Mammary epithelial cell (primary cell): ENCODE measurements at regions of chr1 and their contacts with region 1.

Region 1: DNA sequence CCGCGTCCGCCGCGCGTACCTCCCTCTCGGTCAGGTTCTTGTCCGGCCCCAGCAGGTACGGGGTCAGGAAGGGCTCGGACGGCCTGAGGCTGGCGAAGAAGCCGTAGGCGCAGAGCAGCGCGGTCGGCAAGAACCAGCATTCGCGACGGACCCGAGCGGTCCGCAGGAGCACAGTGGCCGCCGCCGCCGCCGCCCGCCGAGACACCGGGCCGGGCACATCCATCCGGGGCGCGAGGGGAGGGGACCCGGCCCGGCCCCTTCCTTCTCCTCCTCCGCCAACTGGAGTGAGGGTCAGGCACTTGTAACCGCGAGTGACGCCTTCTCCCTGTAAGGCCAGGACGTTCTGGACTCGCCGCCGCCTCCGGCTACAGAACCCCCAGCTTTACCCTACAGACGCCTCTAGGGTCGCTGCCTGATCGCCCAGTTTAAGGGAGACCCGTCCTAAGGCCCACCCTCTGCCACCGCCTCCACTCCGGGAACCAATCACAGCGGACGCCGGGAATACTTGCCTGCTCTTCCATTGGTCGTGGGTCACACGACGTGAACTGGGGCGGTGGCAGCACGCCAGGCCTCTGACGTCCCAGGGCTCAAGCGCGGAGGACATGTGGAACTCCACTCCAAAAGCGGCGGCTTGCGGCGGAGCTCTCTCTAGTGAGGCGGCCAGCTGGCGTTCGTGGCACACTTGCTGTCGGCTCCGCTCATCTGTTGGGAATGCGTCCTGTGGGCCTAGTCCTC is at the start of gene SLC19A2:
- DNase-seq: peak; percentile 99
- H3K4me3 ChIP-seq: peak within 1 kb of the TSS; percentile 73 to 80 (median 79)
- H3K27ac ChIP-seq: peak within 1 kb of the TSS; percentile 87
- H3K4me1 ChIP-seq: peaks cover 26% of the 10 kb centered on the region
- H3K27me3 ChIP-seq: no peaks in the 10 kb centered on the region
- CTCF ChIP-seq: peak in 1 of 2 donors; percentile 46
- total RNA-seq, gene SLC19A2: 6.3 to 11.0 TPM

Region 2: GRCh38 chr1:169443923-169444322 is 41.8 kb before region 1 on chr1:
- CTCF ChIA-PET with region 1: no interaction called
- dilution Hi-C with region 1: no loop called
- in situ Hi-C with region 1: no loop called
- intact Hi-C with region 1: no loop called
- DNase-seq: no peak
- H3K4me3 ChIP-seq: no peak overlapping the region
- H3K27ac ChIP-seq: no peak overlapping the region
- H3K4me1 ChIP-seq: no peaks in the 10 kb centered on the region
- H3K27me3 ChIP-seq: peaks cover 11% of the 10 kb centered on the region
- CTCF ChIP-seq: no peak

Region 3: DNA sequence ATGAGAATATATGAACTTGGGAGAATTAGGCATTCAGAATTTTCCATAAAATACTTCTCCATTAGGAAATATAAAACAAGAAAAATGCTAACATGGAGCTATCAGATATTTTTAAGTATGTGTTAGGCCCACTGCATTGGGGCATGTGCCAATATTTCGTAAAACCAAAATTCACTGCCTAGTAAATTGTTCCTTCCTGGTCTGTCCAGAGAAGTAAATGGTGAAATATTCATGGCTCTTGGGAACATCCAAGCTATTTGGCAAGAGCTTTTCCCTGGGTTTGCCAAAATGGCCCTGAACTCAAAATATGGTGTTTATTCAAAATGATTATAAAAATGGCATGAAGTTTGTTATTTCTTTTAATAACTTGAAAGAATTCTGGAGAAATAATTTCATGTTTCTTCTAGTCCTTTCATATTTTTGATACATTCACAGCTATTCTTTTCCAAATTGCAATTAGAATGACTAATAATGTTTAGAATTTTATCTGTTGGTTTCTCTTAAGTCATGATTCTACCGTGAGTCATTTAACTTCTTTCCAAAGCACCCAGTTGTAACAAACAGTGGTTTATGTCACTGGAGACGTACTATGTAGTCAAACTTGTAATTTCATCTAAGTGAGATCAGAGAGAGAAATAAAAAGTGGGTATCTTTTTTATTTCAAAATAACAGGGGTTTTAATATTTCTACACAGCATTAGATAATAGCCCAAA is 25.8 kb after region 1 on chr1:
- CTCF ChIA-PET with region 1: no interaction called
- dilution Hi-C with region 1: no loop called
- in situ Hi-C with region 1: no loop called
- intact Hi-C with region 1: loop called (anchors 2 kb)
- DNase-seq: peak; percentile 84
- H3K4me3 ChIP-seq: no peak overlapping the region
- H3K27ac ChIP-seq: peak overlapping the region; percentile 50
- H3K4me1 ChIP-seq: peaks cover 18% of the 10 kb centered on the region
- H3K27me3 ChIP-seq: no peaks in the 10 kb centered on the region
- CTCF ChIP-seq: no peak

Region 4: DNA sequence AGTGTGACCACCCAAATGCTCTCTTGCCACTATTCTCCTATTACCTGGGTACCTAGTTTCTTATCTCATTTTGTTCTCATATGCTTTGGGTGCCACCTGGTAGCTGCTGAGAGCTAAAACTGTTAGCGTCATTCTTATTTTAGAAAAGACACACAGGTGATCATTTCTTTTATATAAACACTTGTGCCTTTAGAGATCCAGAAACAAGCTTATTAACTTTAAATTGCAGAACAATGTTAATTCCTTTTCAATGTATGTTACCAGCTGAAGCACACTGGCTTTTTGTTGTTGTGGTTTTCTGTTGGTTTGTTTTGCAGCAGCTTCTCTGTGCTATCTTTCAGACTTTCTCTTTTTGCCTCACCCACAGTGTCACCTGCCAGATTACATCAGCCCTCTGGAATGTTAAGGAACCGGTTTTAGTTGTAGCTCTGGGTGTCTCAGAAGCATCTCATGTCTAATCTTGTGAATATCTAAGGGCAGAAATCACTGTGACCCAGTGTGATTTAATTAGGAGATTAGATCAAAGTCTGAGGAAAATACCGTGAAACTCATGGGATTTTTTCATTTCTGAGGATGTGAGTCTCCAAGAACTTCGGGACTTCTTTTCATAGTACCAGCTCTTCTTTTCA is 43.5 kb after region 1 on chr1:
- CTCF ChIA-PET with region 1: no interaction called
- dilution Hi-C with region 1: no loop called
- in situ Hi-C with region 1: loop called in 1 of 2 experiments (anchors 5 kb)
- intact Hi-C with region 1: loop called (anchors 1 kb)
- DNase-seq: peak; percentile 95
- H3K4me3 ChIP-seq: peak overlapping the region in 2 of 3 experiments; percentile 13 to 15
- H3K27ac ChIP-seq: peak overlapping the region; percentile 55
- H3K4me1 ChIP-seq: peaks cover 27% of the 10 kb centered on the region
- H3K27me3 ChIP-seq: no peaks in the 10 kb centered on the region
- CTCF ChIP-seq: no peak

Region 5: DNA sequence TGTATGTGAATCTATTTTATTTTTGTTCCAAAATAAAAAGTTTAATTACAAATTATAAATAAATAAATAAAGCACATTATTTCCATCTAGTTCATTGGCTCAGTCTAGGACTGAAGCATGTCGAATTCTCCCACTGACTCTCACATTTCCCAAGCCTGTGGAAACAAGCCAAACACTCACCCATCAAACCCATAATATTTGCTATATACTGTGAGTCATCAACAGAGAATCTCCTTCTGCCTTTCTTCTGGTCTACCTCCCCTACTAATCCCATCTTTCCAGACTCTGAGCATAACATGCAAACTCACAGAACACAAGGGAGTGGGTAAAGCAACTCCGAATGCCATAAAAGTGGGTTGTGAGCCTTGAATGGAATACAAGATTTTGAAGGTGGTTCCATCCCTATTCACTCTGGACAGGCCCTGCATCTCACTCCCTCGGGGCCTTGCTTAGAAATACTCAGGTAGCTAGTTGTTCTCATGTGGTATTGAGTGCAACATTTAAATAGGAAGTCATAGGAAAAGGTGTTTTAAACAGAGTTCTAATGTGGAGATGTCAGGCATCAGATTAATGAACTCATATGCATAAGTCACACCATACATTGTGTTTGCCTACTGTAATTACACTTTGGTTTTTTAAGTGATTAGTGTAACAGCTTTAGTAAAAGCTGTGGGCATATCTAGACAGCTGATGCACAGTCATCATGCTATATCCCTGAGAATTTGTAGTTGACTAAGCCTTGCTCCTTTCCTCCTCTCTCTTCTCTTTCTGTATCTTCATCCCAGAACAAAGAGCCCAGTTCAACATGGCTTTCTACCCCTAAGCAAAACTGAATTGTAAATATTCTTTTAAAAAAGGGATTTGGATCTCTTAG is 53.5 kb after region 1 on chr1:
- CTCF ChIA-PET with region 1: no interaction called
- dilution Hi-C with region 1: no loop called
- in situ Hi-C with region 1: no loop called
- intact Hi-C with region 1: loop called (anchors 2 kb)
- DNase-seq: peak; percentile 82
- H3K4me3 ChIP-seq: no peak overlapping the region
- H3K27ac ChIP-seq: no peak overlapping the region
- H3K4me1 ChIP-seq: peaks cover 12% of the 10 kb centered on the region
- H3K27me3 ChIP-seq: no peaks in the 10 kb centered on the region
- CTCF ChIP-seq: no peak

Region 6: GRCh38 chr1:169546087-169546995 is 60.6 kb after region 1 on chr1:
- CTCF ChIA-PET with region 1: interaction called, 3 read pairs
- dilution Hi-C with region 1: no loop called
- in situ Hi-C with region 1: no loop called
- intact Hi-C with region 1: loop called (anchors 1 kb)
- DNase-seq: peak; percentile 59
- H3K4me3 ChIP-seq: no peak overlapping the region
- H3K27ac ChIP-seq: no peak overlapping the region
- H3K4me1 ChIP-seq: no peaks in the 10 kb centered on the region
- H3K27me3 ChIP-seq: no peaks in the 10 kb centered on the region
- CTCF ChIP-seq: peak; percentile 76 to 85

Region 7: DNA sequence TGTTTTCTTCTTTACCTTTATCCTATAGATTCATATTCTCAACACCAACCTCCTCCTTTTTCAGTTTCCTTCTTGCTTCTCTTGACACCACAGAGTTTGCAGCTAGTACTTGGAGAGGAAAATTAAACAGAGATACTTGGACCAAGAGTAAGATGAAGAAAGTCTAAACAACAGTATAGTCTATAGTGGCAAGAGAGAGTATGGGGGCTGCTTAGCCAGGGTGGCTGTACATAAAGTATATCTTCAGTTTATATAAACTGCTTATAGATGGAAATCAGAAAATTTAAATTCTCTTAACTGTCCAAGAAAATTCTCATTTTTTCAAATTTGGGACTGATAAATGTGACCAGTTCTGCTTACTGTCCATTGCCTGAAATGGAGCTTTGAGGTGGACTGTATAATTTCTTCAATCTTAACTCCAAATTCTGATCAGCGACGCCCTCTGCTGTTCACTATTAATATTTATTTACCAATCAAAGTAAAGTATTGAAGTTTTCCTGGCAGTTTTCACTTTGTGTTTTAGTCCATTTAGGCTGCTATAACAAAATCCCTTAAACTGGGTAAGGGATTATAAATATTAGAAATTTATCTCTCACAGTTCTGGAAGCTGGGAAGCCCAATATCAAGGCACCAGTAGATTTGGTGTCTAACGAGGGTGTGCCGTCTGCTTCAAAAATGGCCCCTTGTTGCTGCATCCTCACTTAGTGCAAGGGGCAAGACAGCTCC is 323.8 kb after region 1 on chr1:
- CTCF ChIA-PET with region 1: no interaction called
- dilution Hi-C with region 1: no loop called
- in situ Hi-C with region 1: no loop called
- intact Hi-C with region 1: loop called (anchors 10 kb)
- DNase-seq: peak; percentile 9
- H3K4me3 ChIP-seq: no peak overlapping the region
- H3K27ac ChIP-seq: no peak overlapping the region
- H3K4me1 ChIP-seq: no peaks in the 10 kb centered on the region
- H3K27me3 ChIP-seq: no peaks in the 10 kb centered on the region
- CTCF ChIP-seq: peak; percentile 45 to 55

Region 8: GRCh38 chr1:169824153-169824552 is 338.4 kb after region 1 on chr1:
- CTCF ChIA-PET with region 1: no interaction called
- dilution Hi-C with region 1: no loop called
- in situ Hi-C with region 1: no loop called
- intact Hi-C with region 1: no loop called
- DNase-seq: no peak
- H3K4me3 ChIP-seq: no peak overlapping the region
- H3K27ac ChIP-seq: no peak overlapping the region
- H3K4me1 ChIP-seq: no peaks in the 10 kb centered on the region
- H3K27me3 ChIP-seq: no peaks in the 10 kb centered on the region
- CTCF ChIP-seq: no peak